Transverse colon (tissue), 4 donors: ENCODE measurements at regions of chr5 and their contacts with region 1.

Region 1: DNA sequence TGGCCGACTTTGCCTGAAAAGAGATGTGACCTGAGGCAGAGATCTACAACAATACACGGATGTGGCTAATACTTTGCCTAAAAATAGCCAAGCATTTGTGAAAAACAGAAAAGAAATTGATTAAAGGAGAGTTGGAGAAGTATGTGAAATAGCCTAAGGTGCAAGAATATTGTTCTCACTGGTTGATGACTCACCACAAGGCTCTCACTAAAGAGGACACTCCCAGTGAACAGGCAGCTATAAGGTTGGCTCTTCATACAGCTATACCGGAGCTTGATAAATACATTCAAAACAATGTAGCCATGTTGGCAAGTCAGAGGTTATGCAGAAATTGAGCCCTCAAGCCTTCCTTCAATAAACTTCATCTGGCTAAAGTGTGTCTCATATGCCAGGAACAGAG is 317.2 kb upstream of the GRAMD2B start:
- DNase-seq: no peak
- H3K4me3 ChIP-seq: no peak overlapping the region
- H3K27ac ChIP-seq: no peak overlapping the region
- H3K4me1 ChIP-seq: no peaks in the 10 kb centered on the region
- H3K27me3 ChIP-seq: no peaks in the 10 kb centered on the region
- CTCF ChIP-seq: no peak
- EP300 ChIP-seq: no peak
- POLR2A ChIP-seq: no peak

Region 2: DNA sequence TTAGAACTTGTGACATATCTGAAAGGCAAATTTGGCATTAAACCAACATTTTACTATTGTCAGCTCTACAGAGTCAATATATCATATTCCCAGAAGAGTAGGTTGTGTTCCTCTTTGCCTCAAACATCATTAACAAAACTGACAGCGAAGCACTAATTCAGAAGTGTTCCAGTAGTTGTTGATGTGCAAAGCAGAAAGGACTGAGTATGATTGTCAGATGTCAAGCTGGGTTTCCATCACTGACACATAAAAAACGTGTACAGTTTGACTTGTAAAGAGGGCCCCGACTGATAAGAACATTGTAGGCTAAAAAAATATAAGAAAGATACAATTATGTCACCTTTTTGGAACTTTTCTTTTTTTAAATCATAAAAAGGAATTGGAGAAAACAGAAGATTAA is 1258.1 kb before region 1 on chr5:
- in situ Hi-C with region 1: no loop called
- intact Hi-C with region 1: loop called (anchors 5 kb)
- DNase-seq: no peak
- H3K4me3 ChIP-seq: no peak overlapping the region
- H3K27ac ChIP-seq: no peak overlapping the region
- H3K4me1 ChIP-seq: no peaks in the 10 kb centered on the region
- H3K27me3 ChIP-seq: no peaks in the 10 kb centered on the region
- CTCF ChIP-seq: no peak
- EP300 ChIP-seq: no peak
- POLR2A ChIP-seq: no peak

Region 3: DNA sequence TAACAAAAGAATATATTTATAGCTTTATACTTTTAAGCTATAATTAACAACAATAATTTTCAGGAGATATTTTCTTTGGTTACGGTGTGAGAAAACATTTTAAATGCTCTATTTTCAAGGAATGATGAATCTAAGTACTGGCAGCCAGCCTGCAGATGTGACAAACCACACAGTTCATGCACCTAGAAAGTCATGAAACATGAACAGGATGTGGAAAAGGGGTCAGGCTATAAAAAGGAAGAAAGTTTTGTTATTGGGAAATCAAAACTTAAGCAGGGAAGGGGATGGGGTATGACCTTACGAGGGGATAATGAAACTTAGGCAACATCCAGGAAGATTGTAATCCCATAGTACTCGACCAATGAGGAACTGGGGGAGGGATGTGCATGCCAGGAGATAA is 191.6 kb before region 1 on chr5:
- in situ Hi-C with region 1: no loop called
- intact Hi-C with region 1: no loop called
- DNase-seq: no peak
- H3K4me3 ChIP-seq: no peak overlapping the region
- H3K27ac ChIP-seq: no peak overlapping the region
- H3K4me1 ChIP-seq: no peaks in the 10 kb centered on the region
- H3K27me3 ChIP-seq: no peaks in the 10 kb centered on the region
- CTCF ChIP-seq: no peak
- EP300 ChIP-seq: no peak
- POLR2A ChIP-seq: no peak